ENCODE measurements at regions of chr9 and their contacts with region 1.

Region 1: GRCh38 chr9:100222674-100223073 is 123.6 kb downstream of the INVS start:
- DNase-seq: no peak

Region 2: GRCh38 chr9:99266255-99267023 is 956.2 kb before region 1 on chr9:
- intact Hi-C with region 1: loop called in 1 of 2 experiments (anchors 10 kb)
- DNase-seq: peak; percentile 90

Region 3: DNA sequence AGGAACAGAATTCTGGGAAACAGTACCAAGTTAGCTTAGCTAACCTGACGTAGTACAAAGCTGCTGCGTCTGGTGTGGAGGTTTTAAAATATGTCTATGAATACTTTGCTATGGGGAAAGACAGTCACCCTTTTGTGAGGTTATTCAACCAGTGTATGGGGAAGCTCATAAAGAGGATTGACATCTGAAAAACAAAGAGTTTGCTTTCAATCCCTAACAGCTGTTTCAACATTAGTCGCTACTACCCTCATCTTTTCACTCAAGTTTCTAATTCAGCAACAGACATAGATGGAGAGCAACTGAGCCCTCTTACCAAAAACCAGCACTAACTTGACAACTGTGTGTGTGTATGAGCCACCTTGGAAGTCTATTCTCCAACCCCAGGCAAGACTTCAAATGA is 196.5 kb after region 1 on chr9:
- intact Hi-C with region 1: no loop called
- DNase-seq: no peak

Measured in posterior vena cava (tissue), 2 donors.